Activated B cell treated with CpG ODN at 0.5 μM for 24 hours (primary cell): ENCODE measurements at regions of chr19 and their contacts with region 1.

Region 1: DNA sequence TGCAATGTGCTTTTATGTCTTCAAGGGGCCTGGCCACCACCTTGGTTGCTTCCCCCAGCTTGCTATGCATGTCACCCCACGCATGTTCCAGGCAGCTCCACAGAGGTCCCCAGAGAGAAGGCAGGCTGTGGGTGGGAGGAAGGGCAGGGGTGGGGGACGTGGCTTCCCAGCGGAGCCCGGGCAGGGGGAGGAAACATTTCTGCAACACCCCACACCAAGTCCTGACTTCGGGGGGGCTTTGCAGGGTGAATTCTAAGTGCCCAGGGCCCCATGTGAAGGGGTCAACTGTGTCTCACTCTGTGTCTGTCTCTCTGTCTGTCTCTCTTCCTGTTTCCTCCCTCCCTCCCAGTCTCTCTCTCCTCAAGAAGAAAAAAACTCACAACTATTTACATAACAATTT is 39.6 kb downstream of the LTBP4 start:
- DNase-seq: no peak
- ATAC-seq: peak; percentile 31
- H3K4me3 Mint-ChIP-seq: no peak overlapping the region
- H3K27ac Mint-ChIP-seq: no peak overlapping the region
- H3K4me1 Mint-ChIP-seq: peaks cover 13% of the 10 kb centered on the region
- H3K27me3 Mint-ChIP-seq: peaks cover 4% of the 10 kb centered on the region
- CTCF ChIP-seq: no peak

Region 2: GRCh38 chr19:40139533-40140287 is 501.0 kb before region 1 on chr19:
- CTCF ChIA-PET with region 1: interaction called, 24 read pairs
- POLR2A ChIA-PET with region 1: no interaction called
- intact Hi-C with region 1: no loop called
- DNase-seq: no peak
- ATAC-seq: peak; percentile 47
- H3K4me3 Mint-ChIP-seq: no peak overlapping the region
- H3K27ac Mint-ChIP-seq: no peak overlapping the region
- H3K4me1 Mint-ChIP-seq: peaks cover 33% of the 10 kb centered on the region
- H3K27me3 Mint-ChIP-seq: peaks cover 7% of the 10 kb centered on the region
- CTCF ChIP-seq: no peak

Region 3: DNA sequence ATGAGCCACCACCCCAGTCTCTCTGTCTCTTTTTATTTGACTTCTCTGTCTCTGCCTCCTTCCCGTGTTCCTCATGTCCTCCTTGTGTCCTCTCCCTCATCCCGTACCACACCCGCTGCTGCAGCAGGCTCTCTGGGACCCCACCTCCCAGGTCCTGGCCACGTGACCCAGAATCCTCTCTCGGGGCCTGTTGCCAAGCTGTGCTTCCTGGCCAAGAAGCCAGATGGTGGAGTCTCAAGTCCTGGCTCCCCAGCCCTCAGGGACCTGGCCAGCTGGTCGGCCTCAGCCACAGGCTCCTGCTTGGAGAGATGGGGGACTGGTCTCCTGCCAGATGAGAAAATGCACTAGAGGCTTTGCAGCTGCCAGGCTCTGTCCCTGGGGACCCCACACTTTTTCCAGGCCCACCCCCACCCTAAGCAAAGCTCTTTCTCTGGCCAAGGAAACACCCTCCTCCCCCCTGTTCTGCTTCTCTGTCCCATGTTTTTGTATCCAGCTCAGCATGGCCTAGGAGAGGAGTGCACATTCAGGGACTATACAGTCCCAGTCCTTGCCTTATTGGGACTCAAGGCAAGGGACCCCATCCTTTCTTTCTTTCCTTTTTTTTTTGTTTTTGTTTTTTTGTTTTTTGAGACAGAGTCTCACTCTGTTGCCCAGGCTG is 98.4 kb before region 1 on chr19:
- CTCF ChIA-PET with region 1: interaction called, 20 read pairs
- POLR2A ChIA-PET with region 1: no interaction called
- intact Hi-C with region 1: loop called (anchors 2 kb)
- DNase-seq: no peak
- ATAC-seq: no peak
- H3K4me3 Mint-ChIP-seq: no peak overlapping the region
- H3K27ac Mint-ChIP-seq: no peak overlapping the region
- H3K4me1 Mint-ChIP-seq: no peaks in the 10 kb centered on the region
- H3K27me3 Mint-ChIP-seq: peaks cover 7% of the 10 kb centered on the region
- CTCF ChIP-seq: no peak

Region 4: DNA sequence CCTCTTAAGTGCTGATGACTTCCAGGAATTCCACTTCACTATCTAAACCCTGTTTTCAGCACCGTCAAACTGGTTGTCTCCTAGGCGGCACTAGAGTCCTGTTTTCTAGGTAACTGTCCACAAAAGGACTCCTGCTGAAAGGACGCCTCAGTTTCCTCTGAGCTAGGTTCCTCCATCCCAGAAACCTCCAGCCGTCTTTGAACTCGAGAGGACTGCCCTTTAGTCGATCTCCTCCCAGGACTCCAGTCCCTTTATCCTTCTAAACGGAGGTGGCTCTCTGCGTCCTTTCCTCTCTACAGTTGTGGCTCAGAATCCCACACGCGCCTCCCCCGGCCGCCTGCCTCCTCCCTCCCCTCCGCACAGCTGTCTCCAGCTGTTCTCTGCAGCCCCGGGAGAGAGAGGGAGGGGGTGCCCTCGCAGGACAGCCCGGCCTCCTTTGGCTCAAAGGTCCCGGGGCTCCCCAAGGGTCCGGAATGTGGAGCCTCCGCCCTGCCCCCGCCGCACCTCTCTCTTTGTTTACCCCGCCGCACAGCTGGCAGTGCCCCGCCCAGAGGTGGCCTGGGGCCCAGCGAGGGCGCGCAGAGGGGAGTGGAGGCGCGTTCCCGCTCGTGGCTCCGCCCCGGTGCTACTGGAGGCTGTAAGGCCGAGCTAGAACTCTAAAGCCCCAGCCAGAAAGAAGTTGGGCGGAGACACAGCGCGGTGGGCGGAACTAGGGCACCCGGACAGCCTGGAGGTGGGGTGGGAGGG is 37.2 kb before region 1 on chr19:
- CTCF ChIA-PET with region 1: interaction called, 45 read pairs
- POLR2A ChIA-PET with region 1: no interaction called
- intact Hi-C with region 1: loop called (anchors 2 kb)
- DNase-seq: peak; percentile 90
- ATAC-seq: peak; percentile 72
- H3K4me3 Mint-ChIP-seq: peak overlapping the region; percentile 85
- H3K27ac Mint-ChIP-seq: peak overlapping the region; percentile 77
- H3K4me1 Mint-ChIP-seq: peaks cover 69% of the 10 kb centered on the region
- H3K27me3 Mint-ChIP-seq: peaks cover 22% of the 10 kb centered on the region
- CTCF ChIP-seq: no peak

Region 5: GRCh38 chr19:40718774-40719391 is 78.1 kb after region 1 on chr19:
- CTCF ChIA-PET with region 1: no interaction called
- POLR2A ChIA-PET with region 1: no interaction called
- intact Hi-C with region 1: no loop called
- DNase-seq: no peak
- ATAC-seq: no peak
- H3K4me3 Mint-ChIP-seq: peak overlapping the region; percentile 88
- H3K27ac Mint-ChIP-seq: peak overlapping the region; percentile 85
- H3K4me1 Mint-ChIP-seq: peaks cover 73% of the 10 kb centered on the region
- H3K27me3 Mint-ChIP-seq: no peaks in the 10 kb centered on the region
- CTCF ChIP-seq: no peak